Activated CD4-positive, alpha-beta memory T cell treated with anti-CD3 and anti-CD28 coated beads, Interleukin-2, amount 10 ng/mL, durations not matched to agents 7 days and 5 days (primary cell): ENCODE measurements at regions of chr6 and their contacts with region 1.

Region 1: GRCh38 chr6:30102970-30103874 is 9.7 kb downstream of the TRIM31 start:
- DNase-seq: peak; percentile 87
- H3K4me3 Mint-ChIP-seq: peak overlapping the region; percentile 75
- H3K27ac Mint-ChIP-seq: peak overlapping the region; percentile 16
- H3K4me1 Mint-ChIP-seq: peaks cover 42% of the 10 kb centered on the region
- H3K27me3 Mint-ChIP-seq: peaks cover 61% of the 10 kb centered on the region

Region 2: GRCh38 chr6:30061092-30061857 is 41.9 kb before region 1 on chr6 and contains the start of gene POLR1H:
- CTCF ChIA-PET with region 1: interaction called, 18 read pairs
- POLR2A ChIA-PET with region 1: interaction called, 27 read pairs
- DNase-seq: peak; percentile 90
- H3K4me3 Mint-ChIP-seq: peak within 1 kb of the TSS; percentile 98
- H3K27ac Mint-ChIP-seq: peak within 1 kb of the TSS; percentile 97
- H3K4me1 Mint-ChIP-seq: peaks cover 53% of the 10 kb centered on the region
- H3K27me3 Mint-ChIP-seq: no peaks in the 10 kb centered on the region
- total RNA-seq, gene POLR1H: 75.5 to 77.8 TPM

Region 3: GRCh38 chr6:30075161-30075986 is 27.8 kb before region 1 on chr6 and contains the start of gene RNF39:
- CTCF ChIA-PET with region 1: interaction called, 18 read pairs
- POLR2A ChIA-PET with region 1: interaction called, 3 read pairs
- DNase-seq: no peak
- H3K4me3 Mint-ChIP-seq: no peak within 1 kb of the TSS
- H3K27ac Mint-ChIP-seq: no peak within 1 kb of the TSS
- H3K4me1 Mint-ChIP-seq: peaks cover 48% of the 10 kb centered on the region
- H3K27me3 Mint-ChIP-seq: peaks cover 79% of the 10 kb centered on the region
- total RNA-seq, gene RNF39: not detected

Region 4: GRCh38 chr6:30092852-30093543 is 10.2 kb before region 1 on chr6:
- CTCF ChIA-PET with region 1: interaction called, 15 read pairs
- POLR2A ChIA-PET with region 1: interaction called, 3 read pairs
- DNase-seq: no peak
- H3K4me3 Mint-ChIP-seq: no peak overlapping the region
- H3K27ac Mint-ChIP-seq: no peak overlapping the region
- H3K4me1 Mint-ChIP-seq: peaks cover 3% of the 10 kb centered on the region
- H3K27me3 Mint-ChIP-seq: peaks cover 79% of the 10 kb centered on the region

Region 5: DNA sequence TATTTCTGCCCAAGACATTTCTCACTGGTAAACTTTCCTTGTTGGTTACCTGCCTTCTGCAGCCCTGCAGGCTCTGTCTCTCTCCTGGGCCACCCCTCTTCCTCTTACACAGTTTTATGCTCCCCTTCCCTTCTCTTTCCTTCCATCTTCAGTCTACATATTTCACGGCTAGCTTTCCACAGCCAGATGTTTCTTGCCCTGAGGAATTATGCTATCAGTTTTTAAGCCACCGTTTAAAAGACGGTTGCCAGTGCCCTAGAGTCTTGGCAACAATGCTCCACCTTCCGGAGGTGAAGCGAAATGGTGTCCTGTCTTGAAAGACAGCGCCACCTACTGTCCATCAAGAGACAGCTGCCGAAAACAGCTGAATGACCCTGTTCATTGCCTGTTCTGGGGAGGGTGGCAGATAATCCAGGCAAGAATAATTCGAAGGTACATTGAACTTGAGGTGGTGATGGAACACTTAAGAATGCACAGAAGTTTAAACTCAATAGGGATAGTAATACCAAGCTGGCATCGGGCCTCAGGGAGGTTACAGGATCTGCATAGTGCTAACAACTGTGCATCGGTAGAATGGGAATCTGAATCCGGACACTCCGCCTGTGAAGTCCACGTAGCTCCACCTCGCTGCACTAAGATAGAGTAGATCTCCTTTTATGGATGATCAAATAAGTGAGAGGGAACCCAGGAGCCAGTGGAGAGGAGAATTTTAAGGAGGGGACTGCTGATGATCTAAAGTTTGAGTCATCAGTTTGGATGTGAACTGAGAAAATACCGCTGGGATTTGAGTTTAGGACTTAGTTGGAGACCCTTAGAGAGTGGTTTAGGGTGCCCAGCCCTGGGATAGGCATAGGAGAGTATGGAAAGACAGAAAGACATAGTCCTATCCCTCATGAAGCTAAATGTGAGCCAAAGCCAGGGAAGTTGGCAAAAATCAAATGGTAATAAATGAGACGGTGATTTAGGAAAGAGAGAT is 28.0 kb after region 1 on chr6:
- CTCF ChIA-PET with region 1: interaction called, 186 read pairs
- POLR2A ChIA-PET with region 1: interaction called, 11 read pairs
- DNase-seq: peak; percentile 70
- H3K4me3 Mint-ChIP-seq: no peak overlapping the region
- H3K27ac Mint-ChIP-seq: no peak overlapping the region
- H3K4me1 Mint-ChIP-seq: peaks cover 21% of the 10 kb centered on the region
- H3K27me3 Mint-ChIP-seq: peaks cover 69% of the 10 kb centered on the region

Region 6: GRCh38 chr6:30244560-30244959 is 141.3 kb after region 1 on chr6:
- CTCF ChIA-PET with region 1: no interaction called
- POLR2A ChIA-PET with region 1: no interaction called
- DNase-seq: no peak
- H3K4me3 Mint-ChIP-seq: no peak overlapping the region
- H3K27ac Mint-ChIP-seq: no peak overlapping the region
- H3K4me1 Mint-ChIP-seq: no peaks in the 10 kb centered on the region
- H3K27me3 Mint-ChIP-seq: peaks cover 16% of the 10 kb centered on the region

Region 7: DNA sequence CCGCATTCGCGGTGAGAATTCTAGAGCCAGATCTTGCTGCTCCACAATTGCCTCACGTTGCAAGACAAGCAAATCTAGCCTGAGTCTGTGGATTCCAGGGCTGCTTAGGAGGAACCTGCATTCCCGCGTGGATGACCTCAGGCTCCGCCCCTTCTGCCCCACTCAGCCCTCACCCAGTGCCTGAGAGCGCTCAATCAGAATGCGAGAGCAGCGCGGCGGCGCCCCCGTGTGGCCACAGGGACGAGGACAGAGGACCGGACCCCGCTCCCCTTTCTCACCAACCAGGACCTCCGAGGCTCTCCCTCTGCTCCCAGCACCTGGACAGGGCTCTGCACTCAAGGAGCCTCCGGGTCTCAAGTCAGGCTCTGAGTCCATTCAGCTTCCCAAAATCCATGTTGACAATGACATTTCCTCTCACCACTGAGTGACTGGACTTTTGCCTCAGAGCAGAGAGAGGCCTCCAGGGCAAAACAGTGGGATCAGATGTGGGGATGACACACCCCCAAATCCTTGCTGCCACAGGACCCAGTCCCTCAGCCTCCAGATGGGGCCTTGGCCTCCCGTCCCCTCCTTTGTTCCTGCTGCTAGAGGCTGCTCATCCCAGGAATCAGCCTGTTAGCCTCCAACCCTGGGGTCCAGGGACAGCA is 293.7 kb after region 1 on chr6:
- CTCF ChIA-PET with region 1: interaction called, 11 read pairs
- POLR2A ChIA-PET with region 1: no interaction called
- DNase-seq: peak; percentile 83
- H3K4me3 Mint-ChIP-seq: no peak overlapping the region
- H3K27ac Mint-ChIP-seq: no peak overlapping the region
- H3K4me1 Mint-ChIP-seq: peaks cover 2% of the 10 kb centered on the region
- H3K27me3 Mint-ChIP-seq: peaks cover 45% of the 10 kb centered on the region